Esophagus muscularis mucosa (tissue), 4 donors: ENCODE measurements at regions of chr6 and their contacts with region 1.

Region 1: DNA sequence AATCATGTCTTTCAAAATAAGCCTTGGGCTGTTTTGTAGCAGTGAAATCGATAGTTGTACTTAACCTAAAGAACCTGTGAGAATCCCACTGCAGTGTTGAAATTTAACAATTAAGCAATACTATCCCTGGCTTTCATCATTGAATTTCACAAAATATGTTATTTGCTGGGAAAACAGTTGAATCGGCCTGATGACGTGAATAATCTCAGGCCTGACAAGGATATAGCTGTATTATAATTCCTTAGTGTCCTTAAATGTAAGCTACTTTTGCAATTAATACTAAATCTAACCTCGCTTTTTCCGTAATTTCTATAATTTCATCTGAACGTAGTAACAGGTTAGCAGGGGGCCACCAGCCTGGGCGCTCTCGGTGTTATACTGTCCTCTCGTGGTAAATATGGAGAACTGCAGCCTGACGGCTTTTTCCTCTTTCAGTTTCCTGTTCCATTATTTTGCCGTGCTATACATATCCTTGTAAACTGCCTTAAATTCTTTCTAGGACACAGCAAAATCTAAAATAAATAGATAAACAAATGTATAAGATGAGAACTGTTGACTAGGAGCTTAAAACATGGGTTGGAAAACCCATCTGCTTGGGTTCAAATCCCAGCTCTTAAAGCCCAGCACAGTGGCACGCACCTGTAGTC is 24.0 kb downstream of the MTFR2 start:
- DNase-seq: no peak
- H3K4me3 ChIP-seq: peak overlapping the region; percentile 19 to 50 (median 34)
- H3K27ac ChIP-seq: peak overlapping the region in 1 of 4 donors; percentile 8
- H3K4me1 ChIP-seq: peaks cover 9 to 22% (median 13%) of the 10 kb centered on the region in 4 donors
- H3K27me3 ChIP-seq: no peaks in the 10 kb centered on the region
- CTCF ChIP-seq: peak in 2 of 3 experiments; percentile 100
- EP300 ChIP-seq: no peak
- POLR2A ChIP-seq: no peak

Region 2: DNA sequence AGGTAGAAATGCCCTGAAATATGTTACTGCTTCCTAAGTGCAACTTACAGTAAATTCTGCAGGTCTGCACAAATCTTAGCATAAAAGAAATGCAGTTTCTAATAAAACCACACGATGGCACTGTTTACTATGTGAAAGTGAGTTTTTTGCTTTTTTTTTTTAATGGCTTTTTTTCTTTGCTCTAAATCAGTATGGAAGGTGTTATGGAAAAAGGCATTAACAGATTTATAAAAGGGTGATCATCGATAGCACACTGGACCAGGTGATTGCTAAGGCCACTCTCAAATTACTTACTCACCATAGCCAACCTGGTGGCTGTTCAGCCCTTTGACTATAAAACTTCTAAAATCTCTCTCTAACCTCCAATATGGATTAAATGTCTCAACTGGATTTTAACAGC is 774.5 kb before region 1 on chr6:
- intact Hi-C with region 1: loop called (anchors 5 kb)
- DNase-seq: no peak
- H3K4me3 ChIP-seq: no peak overlapping the region
- H3K27ac ChIP-seq: no peak overlapping the region
- H3K4me1 ChIP-seq: no peaks in the 10 kb centered on the region
- H3K27me3 ChIP-seq: no peaks in the 10 kb centered on the region
- CTCF ChIP-seq: peak; percentile 44 to 72 (median 69)
- EP300 ChIP-seq: no peak
- POLR2A ChIP-seq: no peak

Region 3: DNA sequence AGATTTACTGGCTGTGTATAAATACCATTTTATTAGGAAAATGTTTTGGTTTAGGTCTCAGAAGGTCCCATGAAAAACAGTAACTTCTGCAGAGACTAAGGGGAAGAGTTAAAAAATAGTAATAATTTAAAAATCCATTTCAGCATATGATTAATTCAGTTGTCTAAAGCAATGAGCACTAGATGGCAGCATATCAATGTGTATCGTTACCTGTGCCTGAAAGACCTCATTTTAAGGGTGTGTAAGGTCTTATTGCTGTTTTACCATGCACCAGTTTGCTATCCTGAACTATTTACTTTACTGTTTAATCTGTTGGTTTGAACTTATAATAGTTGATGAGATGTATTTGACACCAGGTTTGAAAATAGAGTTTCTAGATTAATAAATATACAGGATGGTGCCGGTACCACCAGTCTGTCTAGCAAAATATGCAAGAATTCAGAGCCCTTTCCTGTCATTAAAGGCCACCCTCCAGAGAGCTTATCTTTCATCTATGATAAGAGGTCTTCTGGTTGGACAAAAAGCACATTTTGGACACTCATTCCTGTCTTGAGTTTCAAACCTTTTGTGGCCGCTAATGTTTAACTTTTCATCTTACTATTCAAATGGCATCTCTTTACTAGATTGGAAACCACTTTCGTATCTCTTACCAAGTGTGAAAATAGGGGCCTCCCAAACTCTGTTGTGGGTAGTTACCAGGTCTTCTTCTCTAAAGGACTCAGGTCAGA is 719.7 kb before region 1 on chr6:
- intact Hi-C with region 1: loop called (anchors 10 kb)
- DNase-seq: no peak
- H3K4me3 ChIP-seq: no peak overlapping the region
- H3K27ac ChIP-seq: no peak overlapping the region
- H3K4me1 ChIP-seq: no peaks in the 10 kb centered on the region
- H3K27me3 ChIP-seq: no peaks in the 10 kb centered on the region
- CTCF ChIP-seq: peak; percentile 47 to 54 (median 47)
- EP300 ChIP-seq: no peak
- POLR2A ChIP-seq: no peak

Region 4: GRCh38 chr6:135535989-135536414 is 690.1 kb before region 1 on chr6:
- intact Hi-C with region 1: loop called (anchors 5 kb)
- DNase-seq: no peak
- H3K4me3 ChIP-seq: no peak overlapping the region
- H3K27ac ChIP-seq: no peak overlapping the region
- H3K4me1 ChIP-seq: peaks cover 0 to 10% (median 0%) of the 10 kb centered on the region in 4 donors
- H3K27me3 ChIP-seq: no peaks in the 10 kb centered on the region
- CTCF ChIP-seq: peak; percentile 58 to 71 (median 67)
- EP300 ChIP-seq: no peak
- POLR2A ChIP-seq: no peak

Region 5: DNA sequence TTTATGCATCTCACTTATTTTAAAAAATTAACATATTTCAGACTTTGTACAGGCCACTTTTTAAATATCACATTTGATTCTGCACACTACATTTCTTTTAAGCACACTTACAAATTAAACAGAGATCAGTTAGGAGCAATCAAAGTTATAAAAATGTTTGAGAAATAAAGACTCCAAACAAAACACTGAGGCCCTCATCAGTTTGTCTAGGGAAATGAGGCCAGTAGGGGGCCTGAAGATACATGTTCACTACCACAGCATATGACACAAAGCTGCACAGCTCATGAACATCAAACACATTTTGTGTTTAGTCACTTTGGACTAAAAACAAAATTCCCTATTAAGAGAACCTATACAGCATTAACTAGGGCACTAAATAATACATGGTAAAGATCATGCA is 194.2 kb before region 1 on chr6:
- intact Hi-C with region 1: loop called (anchors 5 kb)
- DNase-seq: no peak
- H3K4me3 ChIP-seq: no peak overlapping the region
- H3K27ac ChIP-seq: no peak overlapping the region
- H3K4me1 ChIP-seq: peaks cover 9 to 27% (median 19%) of the 10 kb centered on the region in 4 donors
- H3K27me3 ChIP-seq: no peaks in the 10 kb centered on the region
- CTCF ChIP-seq: peak; percentile 29 to 57 (median 45)
- EP300 ChIP-seq: no peak
- POLR2A ChIP-seq: no peak

Region 6: GRCh38 chr6:136113736-136114173 is 112.4 kb before region 1 on chr6:
- intact Hi-C with region 1: no loop called
- DNase-seq: no peak
- H3K4me3 ChIP-seq: peak overlapping the region in 1 of 4 donors; percentile 1
- H3K27ac ChIP-seq: peak overlapping the region in 3 of 4 donors; percentile 36 to 67 (median 40)
- H3K4me1 ChIP-seq: peaks cover 15 to 34% (median 19%) of the 10 kb centered on the region in 4 donors
- H3K27me3 ChIP-seq: no peaks in the 10 kb centered on the region
- CTCF ChIP-seq: no peak
- EP300 ChIP-seq: no peak
- POLR2A ChIP-seq: no peak

Region 7: DNA sequence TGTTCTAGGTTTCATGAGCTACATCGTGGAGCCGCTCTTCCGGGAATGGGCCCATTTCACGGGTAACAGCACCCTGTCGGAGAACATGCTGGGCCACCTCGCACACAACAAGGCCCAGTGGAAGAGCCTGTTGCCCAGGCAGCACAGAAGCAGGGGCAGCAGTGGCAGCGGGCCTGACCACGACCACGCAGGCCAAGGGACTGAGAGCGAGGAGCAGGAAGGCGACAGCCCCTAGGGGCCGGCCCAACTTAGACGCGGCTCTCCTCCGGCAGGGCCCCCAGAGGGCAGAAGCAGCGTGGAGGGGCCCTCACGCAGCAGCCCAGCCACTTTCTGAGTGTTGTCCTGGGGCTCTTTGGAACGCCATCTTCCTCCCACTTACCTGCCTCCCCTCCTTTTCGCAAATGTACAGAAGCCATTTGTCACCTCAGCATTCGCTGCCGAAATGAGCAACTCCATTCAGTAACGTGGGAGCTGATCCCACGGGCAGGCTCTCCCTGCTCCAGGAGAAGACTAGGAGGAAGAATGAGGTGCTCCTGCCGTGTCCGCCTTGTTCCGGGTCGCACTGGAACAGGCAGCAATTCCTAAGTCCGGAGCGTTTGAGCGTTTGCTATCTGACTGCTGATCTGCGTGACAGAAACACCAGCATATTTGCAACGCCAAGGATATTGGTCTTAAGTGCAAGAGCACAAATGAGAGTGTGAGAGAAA is 34.4 kb before region 1 on chr6:
- intact Hi-C with region 1: no loop called
- DNase-seq: no peak
- H3K4me3 ChIP-seq: no peak overlapping the region
- H3K27ac ChIP-seq: no peak overlapping the region
- H3K4me1 ChIP-seq: no peaks in the 10 kb centered on the region
- H3K27me3 ChIP-seq: no peaks in the 10 kb centered on the region
- CTCF ChIP-seq: no peak
- EP300 ChIP-seq: no peak
- POLR2A ChIP-seq: no peak